CD8-positive, alpha-beta T cell (primary cell): ENCODE measurements at regions of chr13 and their contacts with region 1.

Region 1: DNA sequence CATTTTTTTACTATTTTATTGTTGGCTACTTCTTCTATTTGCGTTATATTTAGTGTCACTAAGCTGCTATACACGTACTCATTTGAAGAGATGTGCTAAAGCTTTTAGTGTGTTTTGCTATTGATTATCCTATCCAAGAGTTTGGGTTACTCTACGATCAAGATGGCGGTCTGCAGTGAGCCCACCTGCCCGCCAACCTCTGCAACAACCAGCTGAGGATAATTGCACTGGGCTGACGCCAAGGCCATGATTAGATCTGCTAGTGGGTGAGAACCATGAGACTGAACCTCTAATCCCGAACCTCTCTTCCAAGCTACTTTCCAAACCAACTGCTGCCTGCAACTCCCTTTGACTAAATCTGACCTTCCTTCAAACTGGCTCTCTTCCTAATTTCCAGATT is 1.8 kb downstream of the CPB2 start:
- DNase-seq: no peak
- ATAC-seq: no peak
- H3K4me3 ChIP-seq: no peak overlapping the region
- H3K4me3 Mint-ChIP-seq: no peak overlapping the region
- H3K27ac ChIP-seq: no peak overlapping the region
- H3K27ac Mint-ChIP-seq: no peak overlapping the region
- H3K4me1 ChIP-seq: no peaks in the 10 kb centered on the region
- H3K4me1 Mint-ChIP-seq: peaks cover 9% of the 10 kb centered on the region
- H3K27me3 ChIP-seq: no peaks in the 10 kb centered on the region
- H3K27me3 Mint-ChIP-seq: peaks cover 6% of the 10 kb centered on the region
- CTCF ChIP-seq: no peak

Region 2: DNA sequence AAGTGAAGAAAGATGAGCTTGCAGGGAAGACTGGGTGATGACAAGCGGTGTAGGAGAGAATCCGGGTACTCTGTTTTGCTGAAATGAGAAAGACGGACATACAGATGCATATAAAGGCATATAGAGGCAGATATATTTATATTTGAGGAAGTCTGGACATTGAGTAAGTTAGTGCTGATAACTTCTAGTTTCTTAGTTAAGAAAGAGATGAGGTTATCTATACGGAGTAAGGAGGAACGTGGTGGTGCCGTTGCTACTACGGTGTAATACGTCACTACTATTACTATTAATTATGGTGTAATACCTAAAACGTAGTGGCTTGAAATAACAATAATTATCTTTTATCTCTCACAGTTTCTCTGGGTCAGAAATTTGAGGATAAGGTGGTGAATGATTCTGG is 11.6 kb after region 1 on chr13:
- CTCF ChIA-PET with region 1: no interaction called
- POLR2A ChIA-PET with region 1: interaction called, 3 read pairs
- intact Hi-C with region 1: loop called in 1 of 2 experiments (anchors 1 kb)
- DNase-seq: no peak
- ATAC-seq: no peak
- H3K4me3 ChIP-seq: no peak overlapping the region
- H3K4me3 Mint-ChIP-seq: no peak overlapping the region
- H3K27ac ChIP-seq: no peak overlapping the region
- H3K27ac Mint-ChIP-seq: no peak overlapping the region
- H3K4me1 ChIP-seq: no peaks in the 10 kb centered on the region
- H3K4me1 Mint-ChIP-seq: no peaks in the 10 kb centered on the region
- H3K27me3 ChIP-seq: no peaks in the 10 kb centered on the region
- H3K27me3 Mint-ChIP-seq: peaks cover 11% of the 10 kb centered on the region
- CTCF ChIP-seq: no peak

Region 3: DNA sequence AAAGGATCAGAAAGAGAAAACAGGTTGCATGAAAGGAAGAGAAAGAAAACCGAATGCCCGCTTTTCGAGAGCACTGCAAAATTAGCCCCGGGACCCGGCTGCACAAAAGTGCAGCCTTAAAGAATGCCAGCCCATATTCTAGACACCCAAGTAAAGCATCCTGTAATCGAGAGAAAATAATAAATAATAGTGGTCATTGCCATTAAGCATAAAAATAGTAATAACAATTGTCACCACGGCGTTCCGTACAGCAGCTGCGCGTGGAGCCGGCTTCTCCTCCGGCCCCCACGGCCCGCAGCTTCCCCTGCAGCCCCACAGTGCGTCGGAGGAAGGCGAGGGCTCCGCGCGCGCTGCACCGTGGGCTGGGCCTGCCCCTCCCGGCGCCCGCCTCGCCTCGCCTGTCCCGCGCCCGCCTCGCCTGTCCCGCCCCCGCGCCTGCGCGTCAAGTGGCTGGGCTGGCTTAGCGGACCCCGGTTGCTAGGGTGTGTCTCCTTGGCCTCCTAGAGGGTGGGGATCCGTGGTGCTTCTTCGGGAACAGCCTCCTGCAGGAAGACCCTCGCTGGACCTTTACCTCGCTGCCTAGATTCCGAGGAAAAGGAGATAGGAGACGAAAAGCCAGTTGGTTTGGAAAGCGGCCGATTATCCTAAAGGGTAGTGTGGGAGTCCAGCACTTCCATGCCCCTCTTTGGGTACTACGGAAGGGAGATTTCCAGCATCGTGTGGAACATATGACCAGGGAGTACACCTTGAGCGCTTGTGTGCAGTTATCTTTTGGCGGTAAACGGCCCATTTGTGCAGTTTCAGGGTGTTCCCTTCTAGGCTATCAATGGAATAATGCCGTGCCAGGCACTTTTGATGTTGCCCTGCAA is 108.7 kb after region 1 on chr13 and contains the start of gene LRRC63:
- CTCF ChIA-PET with region 1: no interaction called
- POLR2A ChIA-PET with region 1: no interaction called
- intact Hi-C with region 1: no loop called
- DNase-seq: peak; percentile 58 to 91 (median 84)
- ATAC-seq: peak; percentile 92
- H3K4me3 ChIP-seq: peak within 1 kb of the TSS; percentile 69 to 73
- H3K4me3 Mint-ChIP-seq: peak within 1 kb of the TSS; percentile 86
- H3K27ac ChIP-seq: peak within 1 kb of the TSS; percentile 74 to 90
- H3K27ac Mint-ChIP-seq: peak within 1 kb of the TSS; percentile 93
- H3K4me1 ChIP-seq: peaks cover 13% of the 10 kb centered on the region
- H3K4me1 Mint-ChIP-seq: peaks cover 19% of the 10 kb centered on the region
- H3K27me3 ChIP-seq: no peaks in the 10 kb centered on the region
- H3K27me3 Mint-ChIP-seq: no peaks in the 10 kb centered on the region
- CTCF ChIP-seq: no peak
- total RNA-seq, gene LRRC63: 0.22 to 0.31 TPM

Region 4: DNA sequence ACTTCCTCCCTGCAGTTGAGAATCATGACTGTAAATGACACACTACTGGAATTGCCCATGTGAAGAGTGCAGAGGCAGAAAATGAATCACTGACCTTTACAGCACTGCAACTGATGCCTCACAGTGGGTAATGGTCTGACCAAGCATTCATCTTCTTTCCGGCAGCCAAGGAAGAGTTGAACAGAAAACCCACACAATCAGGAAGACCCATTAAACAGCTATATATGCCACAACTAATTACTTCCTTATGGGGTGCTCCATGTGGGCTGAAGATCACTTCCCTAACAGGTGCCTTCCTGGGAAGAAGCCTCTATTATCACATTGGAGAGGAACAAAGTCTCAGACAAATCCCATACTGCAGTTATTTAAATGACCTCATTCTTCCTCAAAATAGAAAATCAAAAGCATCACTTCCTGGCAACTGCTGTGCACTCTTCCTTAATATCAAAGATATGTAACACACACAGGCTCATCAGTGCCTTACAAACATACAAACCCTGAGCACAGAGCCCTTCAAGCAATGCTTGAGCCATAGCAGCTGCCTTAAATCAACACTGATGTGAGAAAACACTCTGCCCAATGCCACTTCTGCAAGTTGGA is 238.2 kb after region 1 on chr13:
- CTCF ChIA-PET with region 1: no interaction called
- POLR2A ChIA-PET with region 1: no interaction called
- intact Hi-C with region 1: no loop called
- DNase-seq: peak in 1 of 9 experiments; percentile 34
- ATAC-seq: no peak
- H3K4me3 ChIP-seq: no peak overlapping the region
- H3K4me3 Mint-ChIP-seq: no peak overlapping the region
- H3K27ac ChIP-seq: no peak overlapping the region
- H3K27ac Mint-ChIP-seq: peak overlapping the region; percentile 28
- H3K4me1 ChIP-seq: peaks cover 14% of the 10 kb centered on the region
- H3K4me1 Mint-ChIP-seq: peaks cover 18% of the 10 kb centered on the region
- H3K27me3 ChIP-seq: peaks cover 0 to 3% of the 10 kb centered on the region in 2 experiments
- H3K27me3 Mint-ChIP-seq: no peaks in the 10 kb centered on the region
- CTCF ChIP-seq: no peak